CD14-positive monocyte (primary cell): ENCODE measurements at regions of chr6 and their contacts with region 1.

Region 1: DNA sequence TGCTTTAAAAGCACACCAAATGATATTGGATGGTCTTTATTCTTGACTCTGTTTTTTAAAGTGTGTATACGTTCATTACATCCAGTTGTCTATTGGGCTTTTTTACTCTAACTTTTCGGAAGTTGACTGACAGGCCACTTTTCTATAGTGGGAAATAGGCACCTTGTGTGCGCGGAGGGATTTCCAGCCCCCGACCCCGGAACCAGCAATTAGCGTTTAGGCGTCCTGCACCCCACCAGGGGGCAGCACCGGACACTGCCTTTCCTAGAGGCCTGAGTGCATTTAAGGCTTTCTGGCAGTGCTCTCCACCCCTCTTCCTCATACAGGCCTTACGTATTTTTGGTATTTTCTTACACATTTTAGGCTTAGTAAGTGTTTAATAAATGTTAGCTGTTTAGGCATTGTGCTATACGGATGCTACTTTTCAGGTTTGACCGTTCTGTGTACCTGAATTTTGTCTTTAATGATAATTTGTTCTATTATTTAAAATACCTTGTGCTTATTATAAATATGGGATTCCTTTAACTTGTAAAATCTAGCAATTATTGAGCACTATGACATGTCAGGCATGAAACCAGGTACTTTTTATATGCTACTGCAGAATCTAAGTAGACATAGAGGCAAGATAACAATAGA is 231.8 kb downstream of the BCKDHB start:
- DNase-seq: peak; percentile 23 to 37 (median 37)
- H3K4me3 ChIP-seq: no peak overlapping the region
- H3K4me3 Mint-ChIP-seq: no peak overlapping the region
- H3K27ac ChIP-seq: no peak overlapping the region
- H3K27ac Mint-ChIP-seq: no peak overlapping the region
- H3K4me1 ChIP-seq: no peaks in the 10 kb centered on the region
- H3K4me1 Mint-ChIP-seq: no peaks in the 10 kb centered on the region
- H3K27me3 ChIP-seq: no peaks in the 10 kb centered on the region
- H3K27me3 Mint-ChIP-seq: no peaks in the 10 kb centered on the region
- CTCF ChIP-seq: peak; percentile 88

Region 2: DNA sequence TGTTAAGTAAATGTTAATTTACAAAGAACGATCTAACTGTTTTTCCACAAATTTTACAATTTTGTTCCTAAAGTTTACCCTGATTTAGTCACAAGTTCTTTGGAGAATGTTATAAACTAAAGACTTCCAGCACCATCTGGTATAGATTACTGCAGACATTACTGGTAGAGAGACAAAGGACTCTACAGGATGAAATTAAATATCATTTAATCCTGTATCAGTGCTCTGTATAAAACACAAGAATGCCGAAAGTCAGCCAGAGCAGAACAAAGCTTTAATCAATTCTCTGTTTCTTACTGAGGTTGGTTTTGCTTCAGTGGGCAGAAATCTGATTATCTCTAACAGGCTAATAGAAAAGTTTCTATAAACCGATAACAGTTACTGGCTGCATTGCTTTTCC is 650.6 kb after region 1 on chr6:
- intact Hi-C with region 1: loop called in 1 of 2 experiments (anchors 5 kb)
- DNase-seq: no peak
- H3K4me3 ChIP-seq: no peak overlapping the region
- H3K4me3 Mint-ChIP-seq: no peak overlapping the region
- H3K27ac ChIP-seq: no peak overlapping the region
- H3K27ac Mint-ChIP-seq: no peak overlapping the region
- H3K4me1 ChIP-seq: no peaks in the 10 kb centered on the region
- H3K4me1 Mint-ChIP-seq: no peaks in the 10 kb centered on the region
- H3K27me3 ChIP-seq: no peaks in the 10 kb centered on the region
- H3K27me3 Mint-ChIP-seq: no peaks in the 10 kb centered on the region
- CTCF ChIP-seq: no peak